HCT116 (cell line): ENCODE measurements at regions of chr1 and their contacts with region 1.

Region 1: DNA sequence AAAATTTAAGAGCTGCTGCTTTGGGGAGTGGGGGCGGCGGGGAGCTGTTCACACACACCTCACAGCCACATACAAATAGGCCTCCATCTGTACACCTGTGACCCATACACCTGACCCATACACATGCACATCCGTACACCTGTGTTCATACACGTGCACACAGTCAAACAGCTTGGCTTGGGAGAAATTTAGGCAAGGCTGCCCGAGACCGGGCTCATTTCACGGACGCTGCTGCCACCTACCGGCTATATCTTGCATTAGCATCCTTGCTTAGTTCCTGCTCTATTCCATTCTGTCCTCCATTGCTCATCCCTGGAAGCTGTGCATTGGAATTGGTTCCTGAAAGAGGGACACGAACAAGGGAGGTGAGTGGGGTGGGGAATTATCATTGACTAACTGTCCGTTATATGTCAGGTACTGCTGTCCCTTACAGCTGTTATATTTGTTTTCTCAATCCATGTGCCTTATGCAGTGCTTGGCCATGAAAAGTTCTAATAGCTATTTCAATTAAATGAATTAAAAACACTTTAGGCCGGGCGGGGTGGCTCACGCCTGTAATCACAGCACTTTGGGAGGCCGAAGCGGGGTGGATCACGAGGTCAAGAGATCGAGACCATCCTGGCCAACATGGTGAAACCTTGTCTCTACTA is 37.1 kb upstream of the EPB41 start:
- DNase-seq: peak; percentile 79
- ATAC-seq: peak; percentile 78
- H3K4me3 ChIP-seq: no peak overlapping the region
- H3K27ac ChIP-seq: no peak overlapping the region
- H3K4me1 ChIP-seq: peaks cover 6 to 21% of the 10 kb centered on the region in 2 experiments
- H3K27me3 ChIP-seq: no peaks in the 10 kb centered on the region
- CTCF ChIP-seq: peak in 2 of 3 experiments; percentile 85 to 96; a peak in 4 of 6 replicates
- POLR2A ChIP-seq: no peak
- RAD21 ChIP-seq: no peak

Region 2: DNA sequence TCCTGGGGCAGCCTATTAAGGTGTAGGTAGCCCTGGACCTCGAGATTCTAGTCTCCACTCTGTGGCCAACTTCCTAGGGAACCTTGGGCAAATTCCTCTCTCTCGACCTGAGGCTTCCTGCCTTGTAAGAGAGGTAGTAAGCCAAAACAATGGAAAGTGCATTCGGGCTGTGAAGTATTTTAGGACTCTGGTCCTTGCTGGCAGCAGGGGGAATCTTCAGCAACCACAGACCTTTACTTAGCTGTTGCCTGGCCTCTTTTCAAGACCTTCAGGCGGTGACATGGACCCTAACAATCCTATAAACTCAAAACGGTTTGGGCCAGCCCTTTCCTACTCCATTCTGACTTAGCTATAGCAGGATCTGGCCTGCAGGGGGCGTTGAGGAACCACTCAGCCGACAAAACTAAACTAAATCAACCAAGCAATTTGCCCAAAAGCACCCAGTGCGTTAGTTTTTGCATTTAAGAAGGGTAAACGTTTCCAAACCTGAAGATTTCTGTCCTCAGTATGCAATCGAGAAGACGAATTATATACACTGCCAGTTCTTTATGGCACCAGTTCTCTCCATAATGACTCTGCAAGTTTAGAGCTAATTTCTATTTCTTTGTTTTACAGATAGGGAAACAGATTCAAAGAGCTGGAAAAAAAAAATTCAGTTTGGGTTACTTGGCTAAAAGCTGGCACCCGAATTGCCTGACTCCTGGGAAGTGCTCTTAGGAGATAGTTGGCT is 628.8 kb before region 1 on chr1:
- CTCF ChIA-PET with region 1: interaction called, 12 read pairs
- POLR2A ChIA-PET with region 1: no interaction called
- RAD21 ChIA-PET with region 1: no interaction called
- intact Hi-C with region 1: no loop called
- DNase-seq: peak; percentile 64
- ATAC-seq: peak; percentile 65
- H3K4me3 ChIP-seq: peak overlapping the region; percentile 28 to 45
- H3K27ac ChIP-seq: peak overlapping the region; percentile 74
- H3K4me1 ChIP-seq: peaks cover 33 to 35% of the 10 kb centered on the region in 2 experiments
- H3K27me3 ChIP-seq: no peaks in the 10 kb centered on the region
- CTCF ChIP-seq: peak; percentile 84 to 99 (median 95)
- POLR2A ChIP-seq: no peak
- RAD21 ChIP-seq: peak; percentile 95

Region 3: GRCh38 chr1:28518000-28518744 is 359.1 kb before region 1 on chr1:
- CTCF ChIA-PET with region 1: interaction called, 4 read pairs
- POLR2A ChIA-PET with region 1: interaction called, 5 read pairs
- RAD21 ChIA-PET with region 1: no interaction called
- intact Hi-C with region 1: loop called (anchors 5 kb)
- DNase-seq: no peak
- ATAC-seq: peak; percentile 75
- H3K4me3 ChIP-seq: peak overlapping the region; percentile 69 to 90
- H3K27ac ChIP-seq: peak overlapping the region; percentile 99
- H3K4me1 ChIP-seq: peaks cover 13 to 60% of the 10 kb centered on the region in 2 experiments; a peak in 3 of 4 replicates
- H3K27me3 ChIP-seq: no peaks in the 10 kb centered on the region
- CTCF ChIP-seq: peak in 2 of 3 experiments; percentile 91 to 97; a peak in 4 of 6 replicates
- POLR2A ChIP-seq: peak; percentile 45
- RAD21 ChIP-seq: no peak

Region 4: DNA sequence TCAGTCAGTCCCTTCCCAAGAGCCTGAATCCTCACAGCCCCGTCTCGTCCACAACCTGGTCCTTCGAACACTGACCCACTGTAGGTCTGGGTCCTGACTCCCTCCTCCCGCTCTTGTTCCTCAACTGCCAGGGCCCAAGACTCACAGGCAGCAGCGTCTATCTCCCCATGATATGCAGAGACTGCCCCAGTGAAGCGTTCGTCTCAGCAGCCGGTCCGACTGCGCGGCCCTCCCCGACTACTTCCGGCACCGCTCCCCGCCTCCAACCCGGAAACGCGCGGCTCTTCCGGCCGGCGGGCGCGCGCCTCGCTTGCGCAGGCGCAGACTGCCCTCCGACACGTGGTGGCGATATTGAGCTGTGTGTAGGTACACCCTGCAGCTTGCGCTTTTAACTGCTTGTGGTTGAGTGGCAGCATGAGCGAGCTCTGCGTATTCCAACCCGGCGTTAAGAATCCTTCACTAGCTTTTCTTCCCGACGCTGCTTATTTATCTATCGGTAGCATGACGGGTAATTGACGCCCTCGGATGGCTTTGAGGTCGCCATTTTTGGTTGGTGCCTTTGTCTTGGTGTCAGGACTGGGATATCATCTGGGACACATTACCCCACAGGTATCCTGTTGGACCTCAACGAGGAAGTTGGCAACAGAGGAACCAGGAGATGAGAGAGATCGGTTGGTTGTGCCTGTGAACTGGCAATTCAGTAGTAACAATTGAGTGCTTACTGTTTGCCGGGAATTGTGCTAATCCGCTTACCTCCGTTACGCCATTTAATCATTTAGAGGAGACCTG is 234.2 kb before region 1 on chr1 and contains the start of gene TAF12:
- CTCF ChIA-PET with region 1: interaction called, 14 read pairs
- POLR2A ChIA-PET with region 1: interaction called, 44 read pairs
- RAD21 ChIA-PET with region 1: interaction called, 4 to 6 read pairs
- intact Hi-C with region 1: loop called (anchors 2 kb)
- DNase-seq: peak; percentile 89
- ATAC-seq: peak; percentile 86
- H3K4me3 ChIP-seq: peak within 1 kb of the TSS; percentile 70 to 95
- H3K27ac ChIP-seq: peak within 1 kb of the TSS; percentile 97
- H3K4me1 ChIP-seq: peaks cover 21 to 43% of the 10 kb centered on the region in 2 experiments; a peak in 3 of 4 replicates
- H3K27me3 ChIP-seq: no peaks in the 10 kb centered on the region
- CTCF ChIP-seq: peak in 1 of 3 experiments; percentile 27; a peak in 1 of 6 replicates
- POLR2A ChIP-seq: peak; percentile 98
- RAD21 ChIP-seq: no peak
- total RNA-seq, gene TAF12: 39.0 TPM

Region 5: DNA sequence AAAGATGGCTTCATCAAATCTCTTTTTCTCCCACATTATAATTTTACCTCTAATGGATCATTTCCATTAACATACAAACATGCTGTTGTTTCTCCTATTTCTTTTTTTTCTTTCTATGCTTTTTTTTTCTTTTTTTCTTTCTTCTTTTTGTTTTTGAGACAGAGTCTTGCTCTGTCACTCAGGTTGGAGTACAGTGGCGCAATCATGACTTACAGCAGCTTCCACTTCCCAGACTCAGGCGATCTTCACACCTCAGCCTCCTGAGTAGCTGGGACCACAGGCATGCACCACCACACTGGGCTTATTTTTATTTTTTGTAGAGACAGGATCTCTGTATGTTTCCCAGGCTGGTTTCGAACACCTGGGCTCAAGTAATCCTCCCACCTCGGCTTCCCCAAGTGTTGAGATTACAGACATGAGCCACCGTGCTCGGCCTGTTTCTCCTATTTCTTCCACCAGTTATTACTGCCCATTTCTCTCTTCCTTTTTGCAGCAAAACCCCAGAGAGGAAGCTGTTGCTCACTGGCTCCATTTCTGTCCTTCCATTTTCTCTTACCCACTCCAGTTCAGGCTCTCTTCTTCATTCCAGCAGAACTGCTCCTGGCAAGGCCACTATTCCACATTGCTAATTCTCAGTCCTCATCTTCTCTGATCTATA is 97.4 kb before region 1 on chr1:
- CTCF ChIA-PET with region 1: interaction called, 86 read pairs
- POLR2A ChIA-PET with region 1: interaction called, 8 read pairs
- RAD21 ChIA-PET with region 1: interaction called, 11 to 15 read pairs
- intact Hi-C with region 1: loop called (anchors 1 kb)
- DNase-seq: no peak
- ATAC-seq: no peak
- H3K4me3 ChIP-seq: no peak overlapping the region
- H3K27ac ChIP-seq: no peak overlapping the region
- H3K4me1 ChIP-seq: peaks cover 0 to 3% of the 10 kb centered on the region in 2 experiments; a peak in 1 of 4 replicates
- H3K27me3 ChIP-seq: no peaks in the 10 kb centered on the region
- CTCF ChIP-seq: no peak
- POLR2A ChIP-seq: no peak
- RAD21 ChIP-seq: no peak

Region 6: GRCh38 chr1:29055160-29055559 is 177.9 kb after region 1 on chr1:
- CTCF ChIA-PET with region 1: no interaction called
- POLR2A ChIA-PET with region 1: no interaction called
- RAD21 ChIA-PET with region 1: no interaction called
- intact Hi-C with region 1: no loop called
- DNase-seq: no peak
- ATAC-seq: no peak
- H3K4me3 ChIP-seq: no peak overlapping the region
- H3K27ac ChIP-seq: no peak overlapping the region
- H3K4me1 ChIP-seq: no peaks in the 10 kb centered on the region
- H3K27me3 ChIP-seq: no peaks in the 10 kb centered on the region
- CTCF ChIP-seq: no peak
- POLR2A ChIP-seq: no peak
- RAD21 ChIP-seq: no peak

Region 7: GRCh38 chr1:29197585-29197924 is 320.3 kb after region 1 on chr1:
- CTCF ChIA-PET with region 1: interaction called, 59 read pairs
- POLR2A ChIA-PET with region 1: interaction called, 5 read pairs
- RAD21 ChIA-PET with region 1: interaction called, 7 read pairs
- intact Hi-C with region 1: loop called (anchors 1 kb)
- DNase-seq: peak; percentile 45
- ATAC-seq: peak; percentile 98
- H3K4me3 ChIP-seq: no peak overlapping the region
- H3K27ac ChIP-seq: no peak overlapping the region
- H3K4me1 ChIP-seq: peaks cover 6 to 11% of the 10 kb centered on the region in 2 experiments
- H3K27me3 ChIP-seq: no peaks in the 10 kb centered on the region
- CTCF ChIP-seq: peak; percentile 60 to 67 (median 60)
- POLR2A ChIP-seq: no peak
- RAD21 ChIP-seq: peak; percentile 76

Region 8: DNA sequence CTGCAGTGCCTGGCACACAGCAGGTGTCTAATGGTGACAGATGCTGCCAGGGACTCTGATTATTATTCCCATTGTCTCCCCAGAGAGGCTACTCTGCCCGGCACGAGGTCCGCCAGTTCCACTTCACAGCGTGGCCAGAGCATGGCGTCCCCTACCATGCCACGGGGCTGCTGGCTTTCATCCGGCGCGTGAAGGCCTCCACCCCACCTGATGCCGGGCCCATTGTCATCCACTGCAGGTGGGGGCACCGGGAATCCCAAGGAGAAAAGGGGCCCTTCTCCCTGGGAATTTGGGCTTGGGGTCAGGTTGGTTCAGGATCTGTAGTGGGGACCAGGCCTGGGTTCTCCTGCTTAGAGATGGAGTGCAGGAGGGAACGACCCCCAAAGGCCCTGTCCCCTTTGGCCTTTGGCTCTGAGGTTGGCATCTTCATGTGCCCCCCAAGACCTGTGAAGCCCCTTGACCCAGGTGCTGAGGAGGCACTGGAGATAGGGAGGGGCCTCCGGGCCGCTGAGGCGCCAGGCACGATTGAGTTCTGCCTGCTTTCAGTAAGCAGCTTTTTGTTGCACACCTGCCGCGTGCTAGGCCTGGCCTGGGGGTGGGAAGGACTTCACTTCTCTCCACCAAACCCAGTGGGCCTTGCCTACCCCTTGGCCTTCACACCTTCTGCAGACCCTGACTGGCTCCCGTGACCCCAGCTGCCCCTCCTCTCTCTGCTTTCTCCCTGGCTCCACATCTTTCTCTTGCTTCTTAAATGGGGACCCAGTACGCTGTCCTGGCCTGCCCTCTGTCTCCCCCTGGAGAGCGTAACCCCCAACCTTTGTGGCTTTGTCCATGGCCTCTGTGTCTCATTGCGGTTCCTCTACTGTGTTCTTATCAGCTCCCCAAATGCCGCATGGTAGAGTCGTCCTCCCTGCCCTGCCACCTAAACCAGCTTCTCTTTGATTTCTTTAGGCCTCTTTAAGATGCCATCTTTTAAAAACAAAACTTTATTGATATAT is 435.5 kb after region 1 on chr1:
- CTCF ChIA-PET with region 1: no interaction called
- POLR2A ChIA-PET with region 1: no interaction called
- RAD21 ChIA-PET with region 1: no interaction called
- intact Hi-C with region 1: no loop called
- DNase-seq: no peak
- ATAC-seq: no peak
- H3K4me3 ChIP-seq: no peak overlapping the region
- H3K27ac ChIP-seq: no peak overlapping the region
- H3K4me1 ChIP-seq: no peaks in the 10 kb centered on the region
- H3K27me3 ChIP-seq: no peaks in the 10 kb centered on the region
- CTCF ChIP-seq: no peak
- POLR2A ChIP-seq: no peak
- RAD21 ChIP-seq: no peak